OCI-LY7 (cell line): ENCODE measurements at regions of chr14 and their contacts with region 1.

Region 1: GRCh38 chr14:24411443-24412389 is 12.9 kb downstream of the NYNRIN start:
- DNase-seq: peak; percentile 66
- H3K4me3 ChIP-seq: no peak overlapping the region
- H3K27ac ChIP-seq: no peak overlapping the region
- H3K4me1 ChIP-seq: no peaks in the 10 kb centered on the region
- CTCF ChIP-seq: peak; percentile 77

Region 2: DNA sequence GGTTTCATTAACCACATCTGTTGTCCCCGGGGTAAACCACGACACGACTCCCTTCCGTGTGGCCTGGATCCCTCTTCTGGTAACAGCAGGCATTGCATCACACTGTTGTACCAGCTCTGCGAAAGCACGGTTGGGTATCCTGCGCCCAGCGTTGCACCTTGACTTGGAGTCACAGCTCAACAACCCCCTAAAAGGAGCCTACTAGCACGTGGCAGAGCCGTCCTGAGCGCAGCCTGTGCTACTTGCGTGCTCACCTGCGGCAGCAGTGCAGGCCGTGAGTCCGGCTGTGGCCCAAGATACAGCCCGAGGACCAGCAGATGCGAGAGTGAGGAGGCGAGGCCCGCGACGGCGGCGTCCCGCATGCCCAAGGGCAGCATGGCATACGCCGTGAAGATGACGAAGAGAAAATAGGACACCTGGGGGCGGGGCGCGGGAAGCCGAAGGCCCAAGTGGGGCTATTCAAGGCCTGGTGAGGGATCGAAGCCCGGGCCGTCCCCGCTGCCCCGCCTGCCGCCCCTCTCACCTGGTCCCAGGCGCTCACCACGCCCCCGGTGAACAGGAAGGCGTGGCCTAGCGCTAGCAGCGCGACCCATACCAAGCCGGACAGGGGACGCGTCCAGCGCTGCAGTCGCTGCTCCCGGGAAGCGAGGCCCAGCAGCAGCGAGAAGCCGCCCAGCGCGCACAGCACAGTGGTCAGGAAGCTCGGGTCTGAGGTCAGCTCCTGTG is 79.3 kb before region 1 on chr14:
- CTCF ChIA-PET with region 1: no interaction called
- POLR2A ChIA-PET with region 1: no interaction called
- intact Hi-C with region 1: loop called (anchors 1 kb)
- DNase-seq: peak; percentile 92
- H3K4me3 ChIP-seq: peak overlapping the region; percentile 26
- H3K27ac ChIP-seq: no peak overlapping the region
- H3K4me1 ChIP-seq: peaks cover 26% of the 10 kb centered on the region
- CTCF ChIP-seq: peak; percentile 84

Region 3: GRCh38 chr14:24425704-24426103 is 14.0 kb after region 1 on chr14:
- CTCF ChIA-PET with region 1: interaction called, 10 read pairs
- POLR2A ChIA-PET with region 1: interaction called, 12 read pairs
- intact Hi-C with region 1: no loop called
- DNase-seq: no peak
- H3K4me3 ChIP-seq: no peak overlapping the region
- H3K27ac ChIP-seq: no peak overlapping the region
- H3K4me1 ChIP-seq: peaks cover 13% of the 10 kb centered on the region
- CTCF ChIP-seq: no peak

Region 4: DNA sequence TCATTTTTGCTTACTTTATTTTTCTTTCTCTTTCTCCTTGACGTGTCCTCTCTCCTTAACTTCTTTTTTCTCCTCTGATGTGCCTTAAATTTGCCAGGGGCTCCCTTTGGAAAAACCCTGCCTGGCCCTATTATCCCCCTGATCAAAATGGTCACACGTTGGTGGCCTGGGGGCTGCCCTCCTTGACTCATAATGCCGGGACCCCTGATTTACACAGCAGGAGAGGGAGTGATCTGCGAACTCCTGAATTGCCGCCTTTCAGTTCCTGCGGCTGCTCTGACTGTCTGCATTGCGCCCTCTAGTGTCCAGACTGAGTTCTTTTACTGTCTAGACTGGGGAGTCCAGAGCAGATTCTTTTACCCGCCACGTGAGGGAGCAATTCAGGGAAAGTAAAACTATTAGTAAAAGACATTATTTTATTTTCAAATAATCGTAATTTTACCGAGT is 267.1 kb after region 1 on chr14:
- CTCF ChIA-PET with region 1: no interaction called
- POLR2A ChIA-PET with region 1: no interaction called
- intact Hi-C with region 1: no loop called
- DNase-seq: peak; percentile 90
- H3K4me3 ChIP-seq: peak overlapping the region; percentile 31
- H3K27ac ChIP-seq: no peak overlapping the region
- H3K4me1 ChIP-seq: peaks cover 12% of the 10 kb centered on the region
- CTCF ChIP-seq: peak; percentile 100